Heart left ventricle (tissue), 16 donors: ENCODE measurements at regions of chr5 and their contacts with region 1.

Region 1: DNA sequence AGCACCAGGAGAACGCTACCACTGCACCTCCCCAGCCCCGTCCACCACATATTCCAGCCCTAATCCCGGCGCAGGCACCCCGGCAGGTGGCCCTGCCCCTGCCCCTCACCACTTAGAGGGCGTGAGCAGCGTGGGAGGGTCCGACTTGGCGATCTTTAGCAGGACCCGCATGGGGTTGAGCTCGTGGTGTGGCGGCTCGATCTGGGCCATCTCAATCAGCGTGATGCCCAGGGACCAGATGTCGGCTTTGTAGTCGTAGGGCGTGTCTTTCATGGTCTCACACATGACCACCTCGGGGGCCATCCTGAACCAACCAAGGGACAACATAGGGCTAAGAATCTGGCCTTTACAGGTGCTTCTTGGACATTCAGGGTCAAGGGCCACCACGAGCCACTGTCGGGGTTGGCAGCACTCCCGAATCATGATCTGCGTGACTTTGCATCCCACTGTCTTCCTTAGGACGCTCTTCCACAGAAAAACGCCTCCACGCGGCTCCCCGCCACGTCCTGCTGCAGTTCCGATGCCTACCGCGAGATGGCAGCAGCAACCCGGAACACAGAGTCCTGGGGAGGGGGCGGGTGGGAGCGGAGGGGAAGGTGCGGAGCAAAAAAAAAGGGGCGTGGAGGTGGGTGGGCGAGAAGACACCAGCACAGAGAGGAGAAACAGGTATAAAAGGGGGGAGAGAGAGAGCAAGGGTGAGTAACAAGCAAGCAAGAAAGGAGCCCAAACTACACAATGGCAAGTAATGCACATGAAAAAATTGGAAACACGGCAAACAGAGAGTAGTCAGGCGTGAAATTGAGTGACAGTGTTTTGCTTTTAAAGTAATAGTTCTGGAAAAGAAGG is 81.3 kb downstream of the STK10 start:
- DNase-seq: peak in 4 of 5 donors; percentile 42 to 82 (median 58)
- ATAC-seq: peak in 3 of 4 donors; percentile 21 to 27 (median 26)
- H3K4me3 ChIP-seq: peak overlapping the region in 9 of 12 donors; percentile 9 to 46 (median 29)
- H3K27ac ChIP-seq: peak overlapping the region in 1 of 12 donors; percentile 32
- H3K4me1 ChIP-seq: peaks cover 2 to 83% (median 55%) of the 10 kb centered on the region in 12 donors
- H3K27me3 ChIP-seq: no peaks in the 10 kb centered on the region
- CTCF ChIP-seq: peak; percentile 84 to 99 (median 90)
- POLR2A ChIP-seq: no peak

Region 2: DNA sequence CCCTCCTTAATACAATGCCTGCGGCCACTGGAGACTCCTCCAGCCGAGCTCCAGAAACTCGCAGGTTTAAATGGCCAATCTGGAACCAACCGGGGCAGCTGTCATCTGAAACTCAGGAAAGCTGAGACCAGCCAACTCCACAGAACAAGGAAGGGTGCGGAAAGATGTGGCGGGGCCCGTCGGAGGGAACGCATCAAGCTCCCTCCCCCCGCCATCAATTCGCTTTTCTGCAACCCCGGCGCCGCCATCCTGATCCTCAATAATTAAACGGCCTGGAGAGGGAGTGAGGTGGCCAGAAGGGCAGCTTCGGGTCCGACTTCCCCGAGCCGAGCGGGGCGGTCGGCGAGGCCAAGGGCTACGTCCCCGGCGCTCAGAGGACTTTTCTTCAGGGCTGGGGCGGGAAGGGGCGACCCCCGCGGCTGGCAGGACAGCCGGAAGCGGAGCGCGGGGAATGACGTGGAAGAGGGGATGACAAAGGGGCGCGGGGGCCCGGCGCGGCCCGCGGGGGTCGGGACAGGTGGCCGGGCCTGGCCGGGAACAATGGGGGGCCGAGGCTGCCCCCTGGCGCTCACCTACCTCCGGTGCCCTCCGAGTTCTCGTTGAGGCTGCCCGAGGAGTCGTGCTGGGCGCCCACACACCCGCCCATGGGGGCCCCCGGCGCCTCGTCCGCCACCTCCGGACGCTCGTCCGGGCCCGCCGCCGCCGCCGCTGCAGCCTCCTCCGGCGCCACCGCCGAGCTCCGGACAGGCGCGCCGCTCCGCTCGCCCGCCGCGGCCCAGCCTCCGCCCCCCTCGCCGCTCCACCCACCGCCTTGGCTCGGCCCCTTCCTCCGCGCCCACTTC is 176.5 kb after region 1 on chr5 and contains the start of gene UBTD2:
- intact Hi-C with region 1: loop called in 6 of 10 experiments (anchors 5 kb)
- DNase-seq: peak; percentile 89 to 93 (median 90)
- ATAC-seq: peak; percentile 69 to 94 (median 88)
- H3K4me3 ChIP-seq: peak within 1 kb of the TSS; percentile 58 to 98 (median 90)
- H3K27ac ChIP-seq: peak within 1 kb of the TSS; percentile 85 to 96 (median 92)
- H3K4me1 ChIP-seq: peaks cover 0 to 39% (median 25%) of the 10 kb centered on the region in 12 donors
- H3K27me3 ChIP-seq: no peaks in the 10 kb centered on the region
- CTCF ChIP-seq: peak; percentile 39 to 75 (median 62)
- POLR2A ChIP-seq: peak in 1 of 2 donors; percentile 40
- total RNA-seq, gene UBTD2: 9.1 to 13.3 (median 9.7) TPM

Region 3: DNA sequence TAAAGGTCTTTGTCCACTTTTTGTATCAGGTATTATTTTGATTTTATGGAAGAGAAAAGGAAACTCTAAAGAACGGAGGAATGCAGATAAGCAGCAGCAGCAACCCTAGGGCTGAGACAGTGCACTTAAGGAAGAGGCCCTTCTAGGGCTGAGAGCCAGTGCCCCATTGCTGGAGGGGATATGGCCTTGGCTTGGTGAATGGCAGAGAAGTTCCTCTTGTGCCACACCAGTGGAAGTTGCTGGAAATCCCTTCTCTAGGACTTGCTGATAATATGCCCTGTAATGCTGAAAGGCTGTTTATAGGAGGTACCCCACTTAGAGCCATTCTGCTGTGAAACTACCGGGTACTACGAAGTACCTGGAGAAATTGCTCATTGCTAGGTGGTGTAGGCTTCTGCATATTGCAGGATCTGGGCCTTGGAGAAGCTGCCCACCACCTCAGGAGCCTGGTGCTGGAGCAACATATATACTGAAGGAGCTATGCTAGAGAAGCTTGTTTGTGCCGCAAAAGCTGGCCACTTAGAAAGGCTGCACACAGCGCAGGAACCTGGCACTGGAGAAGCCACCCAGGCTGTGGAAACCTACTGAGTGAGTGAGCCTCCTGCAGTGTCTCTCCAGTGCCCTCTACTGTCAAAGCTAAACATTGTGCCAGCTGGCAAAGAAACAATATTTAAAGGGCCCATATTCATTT is 186.5 kb after region 1 on chr5:
- intact Hi-C with region 1: loop called in 5 of 10 experiments (anchors 2 to 5 kb)
- DNase-seq: peak in 4 of 5 donors; percentile 64 to 73 (median 66)
- ATAC-seq: peak; percentile 91 to 98 (median 97)
- H3K4me3 ChIP-seq: no peak overlapping the region
- H3K27ac ChIP-seq: no peak overlapping the region
- H3K4me1 ChIP-seq: peaks cover 0 to 6% (median 0%) of the 10 kb centered on the region in 12 donors
- H3K27me3 ChIP-seq: no peaks in the 10 kb centered on the region
- CTCF ChIP-seq: peak; percentile 67 to 90 (median 81)
- POLR2A ChIP-seq: no peak

Region 4: GRCh38 chr5:172443441-172444109 is 336.8 kb after region 1 on chr5:
- intact Hi-C with region 1: loop called in 1 of 10 experiments (anchors 10 kb)
- DNase-seq: peak; percentile 85 to 94 (median 86)
- ATAC-seq: peak; percentile 56 to 84 (median 83)
- H3K4me3 ChIP-seq: no peak overlapping the region
- H3K27ac ChIP-seq: peak overlapping the region in 11 of 12 donors; percentile 21 to 82 (median 66)
- H3K4me1 ChIP-seq: peaks cover 2 to 67% (median 41%) of the 10 kb centered on the region in 12 donors
- H3K27me3 ChIP-seq: no peaks in the 10 kb centered on the region
- CTCF ChIP-seq: no peak
- POLR2A ChIP-seq: no peak

Region 5: GRCh38 chr5:172454358-172455086 is 347.8 kb after region 1 on chr5 and contains the start of gene SH3PXD2B:
- intact Hi-C with region 1: loop called in 2 of 10 experiments (anchors 10 kb)
- DNase-seq: peak; percentile 74 to 84 (median 77)
- ATAC-seq: peak; percentile 15 to 67 (median 49)
- H3K4me3 ChIP-seq: peak within 1 kb of the TSS; percentile 63 to 98 (median 84)
- H3K27ac ChIP-seq: peak within 1 kb of the TSS; percentile 60 to 88 (median 74)
- H3K4me1 ChIP-seq: peaks cover 0 to 60% (median 34%) of the 10 kb centered on the region in 12 donors
- H3K27me3 ChIP-seq: no peaks in the 10 kb centered on the region
- CTCF ChIP-seq: no peak
- POLR2A ChIP-seq: peak in 1 of 2 donors; percentile 49
- total RNA-seq, gene SH3PXD2B: 3.3 to 22.7 (median 8.4) TPM